ENCODE measurements at regions of chr7 and their contacts with region 1.

Region 1: GRCh38 chr7:1473864-1474512 is 14.7 kb upstream of the MICALL2 start:
- DNase-seq: peak; percentile 67 to 96 (median 86)
- ATAC-seq: peak; percentile 86
- H3K4me3 ChIP-seq: no peak overlapping the region
- H3K27ac ChIP-seq: no peak overlapping the region
- H3K4me1 ChIP-seq: peaks cover 0 to 8% of the 10 kb centered on the region in 2 donors
- H3K27me3 ChIP-seq: no peaks in the 10 kb centered on the region
- CTCF ChIP-seq: peak; percentile 89 to 95

Region 2: DNA sequence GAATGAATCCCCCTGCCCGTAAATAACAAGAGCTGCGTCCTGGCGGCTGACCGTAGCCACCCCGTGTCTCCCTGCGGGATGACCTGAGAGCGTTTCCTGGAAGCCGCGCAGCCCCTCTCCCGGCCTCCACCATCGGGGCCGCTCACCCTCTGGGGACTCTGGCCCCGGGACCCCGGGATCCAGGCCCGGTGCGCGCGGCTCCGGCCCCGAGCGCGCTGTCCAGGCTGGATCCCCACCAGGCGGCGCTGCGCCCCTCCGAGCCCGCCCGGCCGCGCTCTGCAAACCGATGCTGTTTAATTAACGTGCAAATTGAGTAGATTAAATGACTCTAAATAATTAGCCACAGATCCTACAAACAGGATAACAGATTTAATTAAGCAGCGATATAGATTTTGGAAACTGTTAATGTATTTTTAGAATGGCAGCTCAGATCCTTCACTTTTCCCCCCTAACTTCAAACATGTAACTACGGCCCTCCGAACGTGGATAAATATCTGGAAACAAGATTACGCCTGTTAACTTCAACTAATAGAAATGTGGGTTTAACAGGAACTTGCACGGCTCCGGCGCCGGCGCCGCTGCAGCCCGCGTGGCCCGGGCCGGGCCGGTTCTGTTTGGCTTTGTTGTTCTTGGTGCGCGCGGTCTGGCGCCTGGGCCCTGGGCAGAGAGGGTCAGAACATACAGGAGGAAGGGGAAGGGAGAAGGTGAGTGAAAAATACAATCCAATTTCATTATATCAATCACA is 248.4 kb before region 1 on chr7:
- intact Hi-C with region 1: loop called in 1 of 2 experiments (anchors 10 kb)
- DNase-seq: peak in 1 of 4 donors; percentile 80
- ATAC-seq: peak; percentile 57
- H3K4me3 ChIP-seq: no peak overlapping the region
- H3K27ac ChIP-seq: no peak overlapping the region
- H3K4me1 ChIP-seq: peaks cover 5 to 19% of the 10 kb centered on the region in 2 donors
- H3K27me3 ChIP-seq: peaks cover 89 to 100% of the 10 kb centered on the region in 2 donors
- CTCF ChIP-seq: peak; percentile 72 to 73

Region 3: DNA sequence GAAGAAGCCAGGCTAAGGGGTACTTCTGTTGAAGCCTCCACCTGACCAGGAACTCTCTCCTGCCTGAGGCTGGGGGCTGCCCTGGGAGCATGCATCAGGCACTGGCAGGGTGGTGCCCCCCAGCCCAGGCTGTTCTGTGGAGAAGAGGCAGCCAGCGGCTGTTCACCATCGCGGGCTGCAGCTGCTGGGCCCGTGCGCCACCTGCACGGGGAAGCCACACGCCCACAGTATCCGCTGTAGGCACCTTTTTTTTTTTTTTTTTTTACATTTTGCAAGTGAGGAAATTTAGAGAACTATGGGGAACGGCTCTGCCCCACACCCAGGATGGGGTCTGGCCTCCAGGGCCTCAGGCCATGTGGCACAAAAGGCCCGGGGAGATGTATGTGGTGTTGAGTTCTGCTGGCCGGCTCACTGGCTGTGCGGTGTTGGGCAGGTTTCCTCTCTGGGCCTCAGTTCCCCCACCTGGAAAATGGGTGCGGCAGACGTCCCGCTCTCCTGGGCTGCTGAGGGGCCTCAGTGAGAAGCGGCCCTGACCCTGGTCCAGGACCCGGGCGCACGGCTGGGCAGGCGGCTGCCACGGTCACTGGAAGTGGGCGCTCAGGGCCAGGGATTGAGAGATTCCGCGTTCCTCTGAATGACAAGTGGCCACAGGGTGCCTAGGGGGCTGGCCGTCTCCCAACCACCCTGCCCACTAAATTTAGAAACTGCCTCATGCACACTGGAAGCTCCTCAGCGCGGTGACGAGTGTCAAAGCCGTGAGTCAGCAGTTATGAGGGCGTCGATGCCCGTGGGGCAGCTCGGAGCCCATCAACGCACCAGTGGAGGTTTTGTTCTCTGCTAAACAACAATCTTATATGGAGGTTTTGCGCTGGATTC is 39.0 kb after region 1 on chr7:
- intact Hi-C with region 1: no loop called
- DNase-seq: peak in 2 of 4 donors; percentile 84 to 91
- ATAC-seq: peak; percentile 84
- H3K4me3 ChIP-seq: peak overlapping the region in 1 of 2 donors; percentile 10
- H3K27ac ChIP-seq: peak overlapping the region; percentile 84 to 86
- H3K4me1 ChIP-seq: peaks cover 3 to 31% of the 10 kb centered on the region in 2 donors
- H3K27me3 ChIP-seq: peaks cover 0 to 24% of the 10 kb centered on the region in 2 donors
- CTCF ChIP-seq: no peak